SK-N-SH (cell line): ENCODE measurements at regions of chr17 and their contacts with region 1.

Region 1: GRCh38 chr17:75749545-75750389 is 15.2 kb downstream of the GALK1 start:
- DNase-seq: peak; percentile 94
- H3K4me3 ChIP-seq: peak overlapping the region in 1 of 2 experiments; percentile 30; a peak in 2 of 4 replicates
- H3K27ac ChIP-seq: no peak overlapping the region
- H3K4me1 ChIP-seq: peaks cover 0 to 23% of the 10 kb centered on the region in 2 experiments; a peak in 1 of 4 replicates
- H3K27me3 ChIP-seq: no peaks in the 10 kb centered on the region
- CTCF ChIP-seq: peak; percentile 99
- EP300 ChIP-seq: no peak
- RAD21 ChIP-seq: peak; percentile 82

Region 2: DNA sequence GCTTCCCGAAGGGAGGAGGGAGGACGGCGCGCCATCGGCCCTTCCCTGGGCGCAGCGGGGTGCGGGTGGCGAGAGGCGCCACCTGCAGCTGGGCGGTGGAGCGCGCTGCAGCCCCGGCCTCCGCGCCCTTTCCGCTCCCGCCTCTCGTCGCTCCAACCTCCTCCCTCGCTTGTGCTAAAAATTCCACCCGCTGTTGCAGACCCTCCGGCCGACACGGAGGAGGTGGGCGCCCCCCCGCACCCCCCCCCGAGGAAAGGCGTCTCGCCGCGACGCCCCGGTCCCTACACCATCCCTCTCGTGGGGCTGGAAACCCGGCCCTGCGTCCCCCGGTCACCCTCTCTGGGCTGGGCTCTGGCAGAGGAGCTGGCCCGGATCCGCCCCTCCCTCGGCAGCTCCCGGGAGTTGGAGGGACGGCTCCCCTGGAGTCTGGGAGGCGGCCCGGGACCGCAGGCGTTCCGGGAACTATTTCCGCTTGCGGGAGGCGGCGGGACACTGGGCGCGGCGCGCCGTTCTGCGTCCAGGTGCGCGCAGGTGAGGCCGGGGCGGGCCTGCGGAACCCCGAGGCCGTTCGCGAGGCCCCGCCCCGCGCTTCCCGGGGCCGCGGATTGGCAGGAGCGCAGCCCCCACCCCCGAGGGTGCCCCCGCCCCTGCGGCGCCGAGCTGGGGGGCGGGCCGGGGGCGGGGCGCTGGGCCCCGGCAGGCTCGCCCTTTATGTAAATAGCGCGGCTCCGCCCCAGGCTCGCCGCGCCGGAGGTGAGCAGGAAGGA is 224.6 kb before region 1 on chr17 and contains the start of gene LLGL2:
- CTCF ChIA-PET with region 1: interaction called, 13 read pairs
- POLR2A ChIA-PET with region 1: no interaction called
- DNase-seq: peak; percentile 99
- H3K4me3 ChIP-seq: peak within 1 kb of the TSS; percentile 57 to 67
- H3K27ac ChIP-seq: no peak within 1 kb of the TSS; a peak in 1 of 4 replicates
- H3K4me1 ChIP-seq: peaks cover 0 to 14% of the 10 kb centered on the region in 2 experiments; a peak in 1 of 4 replicates
- H3K27me3 ChIP-seq: peaks cover 12% of the 10 kb centered on the region; the same call in 1 of the 2 replicates
- CTCF ChIP-seq: peak; percentile 45
- EP300 ChIP-seq: no peak
- RAD21 ChIP-seq: peak; percentile 49
- polyA plus RNA-seq, gene LLGL2: 4.4 and 6.7 TPM in 2 replicates

Region 3: GRCh38 chr17:75549221-75550138 is 200.3 kb before region 1 on chr17:
- CTCF ChIA-PET with region 1: no interaction called
- POLR2A ChIA-PET with region 1: no interaction called
- DNase-seq: no peak
- H3K4me3 ChIP-seq: no peak overlapping the region
- H3K27ac ChIP-seq: no peak overlapping the region
- H3K4me1 ChIP-seq: no peaks in the 10 kb centered on the region; a peak in 1 of 4 replicates
- H3K27me3 ChIP-seq: no peaks in the 10 kb centered on the region
- CTCF ChIP-seq: no peak
- EP300 ChIP-seq: no peak
- RAD21 ChIP-seq: no peak

Region 4: DNA sequence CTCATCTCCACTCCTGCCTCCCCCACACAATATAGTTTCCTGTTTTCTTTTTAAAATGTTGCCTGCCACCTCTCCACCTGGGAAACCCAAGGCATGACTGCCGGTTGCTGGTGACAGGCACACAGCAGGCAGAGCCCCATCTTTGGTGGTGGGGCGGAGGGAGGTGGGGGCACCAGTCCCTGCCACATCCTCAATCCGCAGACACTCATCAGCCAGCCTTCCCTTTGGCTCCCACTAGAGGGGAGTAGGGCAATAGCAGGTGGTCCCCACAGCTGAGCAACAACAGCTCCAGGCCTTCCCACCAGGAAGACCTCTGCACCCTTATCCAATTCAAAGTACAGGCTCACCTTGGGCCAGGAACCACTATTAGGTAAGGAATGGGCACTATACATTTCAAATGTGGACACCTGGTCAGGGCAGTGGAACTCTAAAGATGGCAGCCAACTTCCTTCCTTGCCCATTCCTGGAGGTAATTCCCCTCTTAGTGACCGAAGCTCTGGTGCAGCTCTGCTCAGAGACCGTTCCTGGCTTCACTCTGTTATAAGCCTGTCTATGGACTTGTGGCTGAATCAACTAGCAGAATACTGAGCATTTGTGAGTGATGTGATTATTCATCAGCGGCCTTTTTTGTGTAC is 96.7 kb before region 1 on chr17:
- CTCF ChIA-PET with region 1: interaction called, 192 read pairs
- POLR2A ChIA-PET with region 1: interaction called, 3 read pairs
- DNase-seq: peak; percentile 85
- H3K4me3 ChIP-seq: no peak overlapping the region
- H3K27ac ChIP-seq: no peak overlapping the region
- H3K4me1 ChIP-seq: no peaks in the 10 kb centered on the region
- H3K27me3 ChIP-seq: no peaks in the 10 kb centered on the region
- CTCF ChIP-seq: peak; percentile 87
- EP300 ChIP-seq: no peak
- RAD21 ChIP-seq: peak; percentile 68

Region 5: GRCh38 chr17:75693500-75694481 is 56.0 kb before region 1 on chr17:
- CTCF ChIA-PET with region 1: interaction called, 13 read pairs
- POLR2A ChIA-PET with region 1: no interaction called
- DNase-seq: peak; percentile 85
- H3K4me3 ChIP-seq: peak overlapping the region in 1 of 2 experiments; percentile 16; a peak in 2 of 4 replicates
- H3K27ac ChIP-seq: peak overlapping the region; percentile 91 to 99
- H3K4me1 ChIP-seq: peaks cover 45 to 62% of the 10 kb centered on the region in 2 experiments; a peak in 3 of 4 replicates
- H3K27me3 ChIP-seq: no peaks in the 10 kb centered on the region
- CTCF ChIP-seq: peak; percentile 53
- EP300 ChIP-seq: peak; percentile 48 to 87; a peak in 2 of 4 replicates
- RAD21 ChIP-seq: peak; percentile 52

Region 6: GRCh38 chr17:75764711-75765421 is 15.1 kb after region 1 on chr17 and contains the start of gene GALK1:
- CTCF ChIA-PET with region 1: interaction called, 218 read pairs
- POLR2A ChIA-PET with region 1: interaction called, 23 read pairs
- DNase-seq: peak; percentile 98
- H3K4me3 ChIP-seq: peak within 1 kb of the TSS; percentile 58 to 92
- H3K27ac ChIP-seq: peak within 1 kb of the TSS; percentile 33 to 44; a peak in 3 of 4 replicates
- H3K4me1 ChIP-seq: peaks cover 8 to 19% of the 10 kb centered on the region in 2 experiments; a peak in 2 of 4 replicates
- H3K27me3 ChIP-seq: no peaks in the 10 kb centered on the region
- CTCF ChIP-seq: peak; percentile 38
- EP300 ChIP-seq: no peak
- RAD21 ChIP-seq: peak; percentile 49
- polyA plus RNA-seq, gene GALK1: 36.5 and 39.2 TPM in 2 replicates

Region 7: GRCh38 chr17:75799398-75799797 is 49.6 kb after region 1 on chr17:
- CTCF ChIA-PET with region 1: interaction called, 11 read pairs
- POLR2A ChIA-PET with region 1: no interaction called
- DNase-seq: no peak
- H3K4me3 ChIP-seq: no peak overlapping the region
- H3K27ac ChIP-seq: no peak overlapping the region
- H3K4me1 ChIP-seq: no peaks in the 10 kb centered on the region
- H3K27me3 ChIP-seq: no peaks in the 10 kb centered on the region
- CTCF ChIP-seq: no peak
- EP300 ChIP-seq: no peak
- RAD21 ChIP-seq: no peak

Region 8: GRCh38 chr17:75896415-75897159 is 146.8 kb after region 1 on chr17 and contains the start of gene TRIM65:
- CTCF ChIA-PET with region 1: interaction called, 14 read pairs
- POLR2A ChIA-PET with region 1: interaction called, 3 read pairs
- DNase-seq: peak; percentile 98
- H3K4me3 ChIP-seq: peak within 1 kb of the TSS; percentile 73 to 76
- H3K27ac ChIP-seq: peak within 1 kb of the TSS; percentile 69 to 91
- H3K4me1 ChIP-seq: peaks cover 9 to 13% of the 10 kb centered on the region in 2 experiments; a peak in 3 of 4 replicates
- H3K27me3 ChIP-seq: no peaks in the 10 kb centered on the region
- CTCF ChIP-seq: peak; percentile 43
- EP300 ChIP-seq: no peak
- RAD21 ChIP-seq: peak; percentile 32
- polyA plus RNA-seq, gene TRIM65: 13.1 and 18.1 TPM in 2 replicates

Region 9: GRCh38 chr17:76490112-76490746 is 740.5 kb after region 1 on chr17:
- CTCF ChIA-PET with region 1: no interaction called
- POLR2A ChIA-PET with region 1: no interaction called
- DNase-seq: no peak
- H3K4me3 ChIP-seq: no peak overlapping the region
- H3K27ac ChIP-seq: no peak overlapping the region
- H3K4me1 ChIP-seq: peaks cover 6 to 32% of the 10 kb centered on the region in 2 experiments; a peak in 2 of 4 replicates
- H3K27me3 ChIP-seq: no peaks in the 10 kb centered on the region
- CTCF ChIP-seq: no peak
- EP300 ChIP-seq: no peak
- RAD21 ChIP-seq: no peak